Right ventricle myocardium superior (tissue), 1 donor: ENCODE measurements at regions of chr4 and their contacts with region 1.

Region 1: DNA sequence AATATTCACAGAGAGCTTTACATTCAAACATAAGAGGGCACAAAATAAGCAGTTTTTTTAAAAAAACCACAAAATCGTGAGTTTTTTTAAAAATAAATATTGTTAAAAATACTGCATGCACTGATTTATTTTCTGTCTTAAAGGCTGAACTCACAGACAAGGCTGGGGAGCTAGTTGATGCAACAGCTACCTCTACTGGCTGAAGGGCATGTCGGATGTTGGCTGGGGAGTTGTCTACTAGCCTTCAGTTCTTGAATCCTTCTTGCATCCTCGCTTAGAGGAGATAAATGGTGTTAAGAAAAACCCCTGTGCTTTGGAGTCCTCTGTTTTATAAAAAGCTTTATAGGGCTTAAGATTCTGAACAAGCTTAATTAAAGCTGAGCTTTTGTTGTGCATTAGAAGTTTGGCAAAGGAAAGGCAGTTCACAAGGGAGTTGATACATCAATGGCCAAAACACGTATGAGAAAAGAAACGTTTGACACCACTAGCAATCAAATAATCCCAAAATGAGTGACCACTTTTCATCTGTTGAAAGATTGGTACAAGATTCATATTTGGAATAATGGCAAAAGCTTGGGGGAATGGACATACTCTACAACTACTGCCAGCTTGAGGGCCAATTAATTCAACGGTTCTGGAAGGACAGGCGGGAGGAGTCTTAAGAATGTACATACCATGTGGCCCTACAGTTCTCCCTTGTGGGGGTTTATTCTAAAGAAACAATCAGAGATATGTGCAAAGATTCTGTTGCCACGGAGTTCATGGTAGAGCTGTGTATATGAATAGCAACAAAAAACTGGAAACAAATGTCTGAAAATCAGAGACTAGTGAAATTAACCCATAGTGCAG is 94.7 kb downstream of the SEL1L3 start:
- DNase-seq: peak; percentile 50
- ATAC-seq: peak; percentile 92

Region 2: DNA sequence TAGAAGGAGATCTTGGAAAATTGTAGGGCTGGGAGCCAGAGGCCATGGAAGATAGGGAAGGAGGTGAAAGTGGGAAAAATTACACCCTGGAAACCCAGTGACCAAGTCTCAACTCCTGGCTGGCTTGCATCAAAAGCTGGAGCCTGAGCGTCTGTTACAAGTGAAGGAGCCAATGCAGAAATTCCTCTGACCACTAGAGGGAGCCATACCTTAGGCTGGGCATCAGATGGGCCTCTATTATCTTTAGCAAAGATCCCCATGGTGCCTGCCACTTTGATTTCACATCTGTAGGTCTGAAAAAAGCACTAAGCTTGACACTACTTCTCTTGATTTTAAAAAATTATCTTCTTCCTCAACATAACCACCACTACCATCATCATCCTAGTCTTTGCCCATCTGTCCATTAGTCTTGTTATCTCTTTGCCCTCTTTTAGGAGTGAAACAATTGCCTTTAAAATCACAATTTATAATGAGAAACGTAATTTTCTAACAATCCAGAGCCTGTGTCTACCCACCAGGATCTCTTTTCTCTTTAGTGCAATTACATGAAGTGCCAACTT is 328.1 kb before region 1 on chr4:
- intact Hi-C with region 1: loop called (anchors 2 kb)
- DNase-seq: no peak
- ATAC-seq: peak; percentile 87

Region 3: GRCh38 chr4:25756503-25756902 is 11.6 kb before region 1 on chr4:
- intact Hi-C with region 1: no loop called
- DNase-seq: no peak
- ATAC-seq: no peak